Psoas muscle (tissue), 8 donors: ENCODE measurements at regions of chr19 and their contacts with region 1.

Region 1: DNA sequence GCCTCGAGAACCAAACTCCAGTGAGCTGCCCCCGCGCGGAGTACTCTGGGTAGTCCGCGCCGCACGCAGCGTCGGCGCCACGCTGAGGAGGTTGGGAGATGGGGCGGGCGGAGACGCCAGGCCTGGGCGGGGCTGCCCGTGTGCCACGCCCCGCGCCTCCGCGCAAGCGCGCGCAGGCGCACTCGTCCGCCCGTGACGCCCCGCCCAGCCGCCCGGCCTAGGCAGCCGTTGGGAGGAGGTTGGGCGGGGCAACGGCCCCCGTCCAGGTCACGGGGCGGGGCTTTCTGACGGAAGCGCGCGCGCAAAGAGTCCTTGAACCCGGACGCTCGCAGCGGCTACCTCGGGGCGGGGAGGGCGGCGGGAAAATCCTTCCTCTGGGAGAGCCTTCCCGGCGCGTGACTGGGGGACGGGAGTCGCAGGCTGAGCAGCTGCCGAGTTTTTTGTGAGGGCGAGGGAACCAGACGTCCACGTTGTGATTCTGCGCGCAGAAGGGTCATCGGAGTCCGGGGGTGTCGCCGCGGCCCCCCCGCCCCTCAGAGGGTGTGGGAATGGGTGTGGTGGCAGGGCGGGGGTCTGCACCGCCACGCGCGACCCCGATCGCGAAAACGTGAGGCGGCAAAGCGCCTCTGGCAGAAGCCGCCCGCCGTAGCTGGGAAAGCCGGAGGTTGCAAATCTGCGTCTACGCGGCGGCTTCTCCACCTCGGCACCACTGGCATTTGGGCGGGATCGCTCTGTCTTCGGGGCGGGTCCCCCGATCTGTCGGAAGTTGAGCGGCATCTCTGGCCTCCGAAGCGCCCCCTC is at the start of gene MED26:
- DNase-seq: peak; percentile 94 to 97
- ATAC-seq: peak; percentile 91 to 95 (median 94)
- H3K4me3 ChIP-seq: peak within 1 kb of the TSS; percentile 94
- H3K27ac ChIP-seq: peak within 1 kb of the TSS; percentile 98
- H3K4me1 ChIP-seq: peaks cover 34% of the 10 kb centered on the region
- H3K27me3 ChIP-seq: no peaks in the 10 kb centered on the region
- CTCF ChIP-seq: no peak
- total RNA-seq, gene MED26: 4.8 to 9.6 (median 5.5) TPM

Region 2: GRCh38 chr19:16572332-16573211 is 55.8 kb before region 1 on chr19 and contains the start of gene SLC35E1:
- intact Hi-C with region 1: loop called (anchors 5 kb)
- DNase-seq: peak; percentile 96 to 99
- ATAC-seq: peak; percentile 94 to 96 (median 95)
- H3K4me3 ChIP-seq: peak within 1 kb of the TSS; percentile 95
- H3K27ac ChIP-seq: peak within 1 kb of the TSS; percentile 86
- H3K4me1 ChIP-seq: peaks cover 58% of the 10 kb centered on the region
- H3K27me3 ChIP-seq: no peaks in the 10 kb centered on the region
- CTCF ChIP-seq: no peak
- total RNA-seq, gene SLC35E1: 25.6 to 40.7 (median 26.9) TPM

Region 3: GRCh38 chr19:16584248-16585141 is 43.9 kb before region 1 on chr19:
- intact Hi-C with region 1: loop called (anchors 5 kb)
- DNase-seq: peak; percentile 81 to 91
- ATAC-seq: peak; percentile 61 to 67 (median 66)
- H3K4me3 ChIP-seq: peak overlapping the region; percentile 46
- H3K27ac ChIP-seq: peak overlapping the region; percentile 93
- H3K4me1 ChIP-seq: peaks cover 99% of the 10 kb centered on the region
- H3K27me3 ChIP-seq: no peaks in the 10 kb centered on the region
- CTCF ChIP-seq: no peak